Panc1 (cell line): ENCODE measurements at regions of chr1 and their contacts with region 1.

Region 1: DNA sequence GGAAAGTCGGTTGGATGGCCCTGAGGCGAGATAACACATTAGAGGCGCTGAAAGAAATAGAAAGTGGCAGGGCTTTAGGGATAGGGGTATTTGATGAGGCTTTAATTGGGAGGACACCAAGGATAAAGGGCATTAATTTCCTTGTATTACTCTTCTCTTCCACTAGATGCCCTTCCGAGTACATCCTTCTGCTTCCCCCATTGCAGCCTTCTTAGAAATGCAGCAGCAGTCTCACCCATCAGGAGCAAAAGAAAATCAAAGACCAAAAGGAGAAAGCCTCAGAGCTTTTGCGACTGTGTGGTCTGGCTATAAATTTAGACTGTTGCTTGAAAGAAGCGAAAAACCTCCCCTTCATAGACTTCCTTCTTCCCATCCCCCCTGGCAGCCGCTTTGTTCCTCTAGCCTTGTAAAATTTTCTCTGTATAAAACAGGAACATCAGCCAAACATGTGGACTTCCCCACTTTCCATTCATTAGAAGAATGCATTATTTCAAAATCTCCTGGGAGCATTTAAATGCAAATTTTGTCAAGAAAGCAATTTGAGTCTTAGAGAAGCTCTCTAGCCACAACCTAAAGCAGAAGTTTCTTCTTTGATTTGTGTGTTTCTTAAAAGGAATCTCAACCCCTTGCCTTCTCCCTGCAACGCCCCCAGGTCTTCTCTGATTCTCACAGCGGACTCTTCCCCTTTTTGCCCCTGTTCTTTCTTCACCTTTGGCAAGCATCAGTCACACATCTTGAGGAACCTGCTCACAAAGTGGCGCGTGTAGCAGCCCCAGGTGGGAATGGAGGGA is 76.6 kb downstream of the NDUFS5 start:
- DNase-seq: no peak
- ATAC-seq: peak; percentile 59
- H3K4me3 ChIP-seq: peak overlapping the region; percentile 6 to 67; a peak in 3 of 4 replicates
- H3K27ac ChIP-seq: peak overlapping the region; percentile 99
- H3K4me1 ChIP-seq: peaks cover 20% of the 10 kb centered on the region
- H3K27me3 ChIP-seq: no peaks in the 10 kb centered on the region
- CTCF ChIP-seq: peak; percentile 89

Region 2: DNA sequence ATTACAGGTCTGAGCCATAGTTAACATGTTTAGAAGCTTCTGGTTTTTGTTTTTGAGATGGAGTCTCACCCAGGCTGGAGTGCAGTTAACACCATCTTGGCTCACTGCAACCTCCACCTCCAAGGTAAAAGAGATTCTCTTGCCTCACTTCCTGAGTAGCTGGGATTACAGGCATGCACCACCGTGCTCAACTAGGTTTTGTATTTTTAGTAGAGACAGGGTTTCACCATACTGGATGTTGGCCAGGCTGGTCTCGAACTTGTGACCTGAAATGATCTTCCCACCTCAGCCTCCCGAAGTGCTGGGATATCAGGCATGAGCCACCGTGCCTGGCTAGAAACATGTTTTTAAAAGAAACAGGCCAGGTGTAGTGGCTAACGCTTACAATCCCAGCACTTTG is 66.1 kb before region 1 on chr1:
- CTCF ChIA-PET with region 1: no interaction called
- POLR2A ChIA-PET with region 1: no interaction called
- in situ Hi-C with region 1: no loop called
- intact Hi-C with region 1: no loop called
- DNase-seq: no peak
- ATAC-seq: no peak
- H3K4me3 ChIP-seq: no peak overlapping the region
- H3K27ac ChIP-seq: no peak overlapping the region
- H3K4me1 ChIP-seq: no peaks in the 10 kb centered on the region
- H3K27me3 ChIP-seq: no peaks in the 10 kb centered on the region
- CTCF ChIP-seq: no peak

Region 3: GRCh38 chr1:39170731-39171667 is 68.3 kb after region 1 on chr1:
- CTCF ChIA-PET with region 1: interaction called, 4 read pairs
- POLR2A ChIA-PET with region 1: interaction called, 5 read pairs
- in situ Hi-C with region 1: no loop called
- intact Hi-C with region 1: loop called (anchors 5 kb)
- DNase-seq: no peak
- ATAC-seq: peak; percentile 50
- H3K4me3 ChIP-seq: peak overlapping the region in 1 of 2 experiments; percentile 5; a peak in 1 of 4 replicates
- H3K27ac ChIP-seq: peak overlapping the region; percentile 97
- H3K4me1 ChIP-seq: peaks cover 75% of the 10 kb centered on the region
- H3K27me3 ChIP-seq: no peaks in the 10 kb centered on the region
- CTCF ChIP-seq: no peak

Region 4: GRCh38 chr1:39258146-39258924 is 155.6 kb after region 1 on chr1:
- CTCF ChIA-PET with region 1: interaction called, 9 read pairs
- POLR2A ChIA-PET with region 1: no interaction called
- in situ Hi-C with region 1: no loop called
- intact Hi-C with region 1: loop called (anchors 2 kb)
- DNase-seq: peak; percentile 72
- ATAC-seq: peak; percentile 94
- H3K4me3 ChIP-seq: no peak overlapping the region
- H3K27ac ChIP-seq: peak overlapping the region; percentile 52
- H3K4me1 ChIP-seq: peaks cover 12% of the 10 kb centered on the region
- H3K27me3 ChIP-seq: no peaks in the 10 kb centered on the region
- CTCF ChIP-seq: peak; percentile 93

Region 5: GRCh38 chr1:39282537-39283216 is 179.9 kb after region 1 on chr1:
- CTCF ChIA-PET with region 1: interaction called, 3 read pairs
- POLR2A ChIA-PET with region 1: interaction called, 10 read pairs
- in situ Hi-C with region 1: no loop called
- intact Hi-C with region 1: no loop called
- DNase-seq: no peak
- ATAC-seq: no peak
- H3K4me3 ChIP-seq: no peak overlapping the region
- H3K27ac ChIP-seq: no peak overlapping the region
- H3K4me1 ChIP-seq: no peaks in the 10 kb centered on the region
- H3K27me3 ChIP-seq: no peaks in the 10 kb centered on the region
- CTCF ChIP-seq: no peak

Region 6: DNA sequence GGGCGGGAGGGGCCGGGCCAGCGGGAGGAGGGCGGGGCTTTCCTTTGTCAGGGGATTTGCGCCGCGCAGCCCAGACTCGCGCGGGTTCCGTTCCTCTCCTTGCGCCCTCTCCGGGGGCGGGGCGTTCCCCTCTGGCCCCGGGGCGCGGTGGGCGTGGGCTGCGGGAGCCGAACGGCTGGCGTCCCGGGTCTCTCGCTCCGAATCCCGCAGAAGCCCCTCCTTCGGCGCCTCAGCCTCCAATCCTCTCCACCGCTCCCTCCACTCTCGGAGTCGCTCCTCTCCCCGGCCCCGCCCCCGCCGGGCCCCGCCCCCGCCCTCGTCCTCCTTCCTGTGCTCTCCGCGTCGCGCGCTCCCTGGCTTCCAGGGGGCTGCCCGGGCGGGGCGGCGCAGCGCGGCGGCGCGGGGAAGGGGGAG is 305.9 kb after region 1 on chr1:
- CTCF ChIA-PET with region 1: no interaction called
- POLR2A ChIA-PET with region 1: no interaction called
- in situ Hi-C with region 1: no loop called
- intact Hi-C with region 1: loop called (anchors 5 kb)
- DNase-seq: no peak
- ATAC-seq: peak; percentile 87
- H3K4me3 ChIP-seq: peak overlapping the region; percentile 71 to 95
- H3K27ac ChIP-seq: peak overlapping the region; percentile 100; the same call in 1 of the 2 replicates
- H3K4me1 ChIP-seq: peaks cover 72% of the 10 kb centered on the region
- H3K27me3 ChIP-seq: no peaks in the 10 kb centered on the region
- CTCF ChIP-seq: no peak